ENCODE measurements at regions of chr1 and their contacts with region 1.

Region 1: DNA sequence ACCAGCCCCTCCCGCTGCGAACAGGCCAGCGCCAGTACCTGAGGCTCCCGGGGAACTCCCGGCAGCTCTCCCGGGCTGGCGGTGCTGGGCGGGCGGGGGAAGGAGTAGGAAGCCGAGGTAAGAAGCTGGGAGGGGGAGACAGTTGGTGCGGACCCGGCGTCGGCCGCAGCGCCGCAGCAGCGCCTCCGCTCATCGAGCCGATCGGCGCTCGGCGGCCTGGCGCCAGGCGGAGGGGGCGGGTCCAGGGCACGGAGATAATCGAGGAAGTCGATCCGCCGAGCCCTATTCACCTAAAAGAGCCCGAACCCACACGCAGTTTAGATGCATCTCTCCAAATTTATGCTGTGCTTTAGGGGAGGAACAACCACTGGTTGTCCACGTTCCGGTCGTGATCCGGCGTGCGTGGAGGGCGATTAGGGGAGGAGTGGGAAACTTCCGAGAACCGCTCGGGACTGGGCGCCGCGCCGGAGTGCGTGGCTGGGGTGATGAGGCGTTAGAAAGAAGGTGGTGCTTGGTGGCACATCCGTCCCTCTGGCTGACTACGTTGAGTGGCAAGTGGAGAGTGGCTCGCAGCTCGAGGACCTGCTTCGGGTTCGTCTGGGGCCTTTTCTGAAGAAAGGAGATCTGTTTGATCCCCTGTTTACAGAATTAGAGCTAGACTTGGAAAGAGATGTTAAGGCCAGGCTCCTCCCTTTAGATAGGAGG is at the start of gene VAMP4:
- DNase-seq: peak; percentile 89
- H3K4me3 Mint-ChIP-seq: peak within 1 kb of the TSS; percentile 99
- H3K27ac Mint-ChIP-seq: peak within 1 kb of the TSS; percentile 100
- H3K4me1 Mint-ChIP-seq: peaks cover 48% of the 10 kb centered on the region
- H3K27me3 Mint-ChIP-seq: no peaks in the 10 kb centered on the region
- total RNA-seq, gene VAMP4: 31.3 to 31.5 TPM

Region 2: DNA sequence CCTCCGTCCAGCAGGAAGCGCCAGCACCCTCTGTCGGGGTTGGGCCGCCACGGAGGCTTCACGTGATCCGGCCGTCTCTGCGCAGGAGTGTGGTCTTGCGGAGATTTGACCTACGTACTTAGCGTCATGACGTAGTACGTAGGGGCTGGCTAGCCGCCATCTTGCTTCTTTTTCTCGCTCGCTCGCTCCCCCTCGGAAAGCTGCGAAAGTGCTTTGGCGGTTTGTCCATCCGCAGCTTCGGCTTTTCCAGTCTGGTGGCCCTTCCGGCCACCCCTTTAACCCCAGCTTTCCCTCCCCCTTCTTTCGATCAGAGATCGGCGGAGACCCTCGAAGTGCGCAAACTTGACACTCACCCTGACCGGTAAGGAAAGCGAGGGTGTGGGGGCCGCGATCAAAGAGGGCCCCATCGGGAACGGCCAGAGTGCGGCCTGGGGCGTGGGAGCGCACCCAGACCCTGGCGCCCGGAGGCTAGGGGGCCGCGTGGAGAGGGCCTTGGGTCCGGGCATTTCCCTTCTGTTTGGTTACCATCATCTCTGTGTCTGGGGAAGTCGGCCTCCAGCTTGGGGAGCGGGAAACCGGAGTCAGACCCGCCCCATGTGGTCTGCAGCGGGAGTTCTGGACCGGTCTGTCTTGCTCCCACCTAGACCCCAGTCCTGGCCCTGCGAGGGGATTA is 256.5 kb before region 1 on chr1 and contains the start of gene PRRC2C:
- CTCF ChIA-PET with region 1: interaction called, 5 read pairs
- POLR2A ChIA-PET with region 1: interaction called, 37 read pairs
- DNase-seq: peak; percentile 95
- H3K4me3 Mint-ChIP-seq: peak within 1 kb of the TSS; percentile 92
- H3K27ac Mint-ChIP-seq: peak within 1 kb of the TSS; percentile 99
- H3K4me1 Mint-ChIP-seq: peaks cover 48% of the 10 kb centered on the region
- H3K27me3 Mint-ChIP-seq: no peaks in the 10 kb centered on the region
- total RNA-seq, gene PRRC2C: 188 to 202 TPM

Region 3: GRCh38 chr1:171654942-171655745 is 86.9 kb before region 1 on chr1:
- CTCF ChIA-PET with region 1: interaction called, 12 read pairs
- POLR2A ChIA-PET with region 1: interaction called, 5 read pairs
- DNase-seq: peak; percentile 83
- H3K4me3 Mint-ChIP-seq: peak overlapping the region; percentile 37
- H3K27ac Mint-ChIP-seq: no peak overlapping the region
- H3K4me1 Mint-ChIP-seq: peaks cover 10% of the 10 kb centered on the region
- H3K27me3 Mint-ChIP-seq: peaks cover 22% of the 10 kb centered on the region

Region 4: GRCh38 chr1:171781176-171781875 is 39.3 kb after region 1 on chr1 and contains the start of gene METTL13:
- CTCF ChIA-PET with region 1: interaction called, 9 read pairs
- POLR2A ChIA-PET with region 1: interaction called, 108 read pairs
- DNase-seq: peak; percentile 99
- H3K4me3 Mint-ChIP-seq: peak within 1 kb of the TSS; percentile 94
- H3K27ac Mint-ChIP-seq: peak within 1 kb of the TSS; percentile 91
- H3K4me1 Mint-ChIP-seq: peaks cover 63% of the 10 kb centered on the region
- H3K27me3 Mint-ChIP-seq: no peaks in the 10 kb centered on the region
- total RNA-seq, gene METTL13: 42.9 to 44.5 TPM

Region 5: DNA sequence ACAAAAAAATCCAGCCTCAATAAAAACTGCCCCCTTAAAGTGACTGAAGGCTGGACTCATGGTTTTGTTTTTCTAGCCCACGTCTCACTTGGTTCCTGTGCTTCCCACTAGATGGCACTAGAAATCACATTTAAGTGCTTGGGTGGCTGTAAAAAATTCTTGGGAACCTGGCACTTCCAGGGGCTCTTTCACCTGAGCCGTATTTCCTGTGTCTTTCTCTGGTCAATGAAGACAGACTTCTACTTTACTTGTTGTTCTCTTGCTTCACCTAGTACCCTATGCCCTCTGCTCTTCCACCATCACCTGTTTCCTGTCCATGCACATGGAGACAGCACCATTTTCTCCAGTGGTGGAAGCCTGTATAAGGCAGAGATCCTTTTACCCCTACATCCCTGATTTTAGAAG is 59.5 kb after region 1 on chr1:
- CTCF ChIA-PET with region 1: interaction called, 3 read pairs
- POLR2A ChIA-PET with region 1: interaction called, 12 read pairs
- DNase-seq: no peak
- H3K4me3 Mint-ChIP-seq: no peak overlapping the region
- H3K27ac Mint-ChIP-seq: no peak overlapping the region
- H3K4me1 Mint-ChIP-seq: peaks cover 6% of the 10 kb centered on the region
- H3K27me3 Mint-ChIP-seq: no peaks in the 10 kb centered on the region

Measured in activated CD4-positive, alpha-beta memory T cell treated with anti-CD3 and anti-CD28 coated beads, Interleukin-2, amount 10 ng/mL, durations not matched to agents 7 days and 5 days (primary cell).